Heart left ventricle (tissue), 16 donors: ENCODE measurements at regions of chr5 and their contacts with region 1.

Region 1: GRCh38 chr5:75656311-75657003 is 45.2 kb downstream of the ANKDD1B start:
- DNase-seq: peak in 1 of 5 donors; percentile 39
- ATAC-seq: peak in 2 of 4 donors; percentile 46 to 57
- H3K4me3 ChIP-seq: peak overlapping the region in 10 of 12 donors; percentile 9 to 64 (median 44)
- H3K27ac ChIP-seq: peak overlapping the region in 4 of 12 donors; percentile 32 to 67 (median 37)
- H3K4me1 ChIP-seq: peaks cover 0 to 14% (median 0%) of the 10 kb centered on the region in 12 donors
- H3K27me3 ChIP-seq: no peaks in the 10 kb centered on the region
- CTCF ChIP-seq: no peak
- POLR2A ChIP-seq: no peak

Region 2: GRCh38 chr5:75496026-75496425 is 160.4 kb before region 1 on chr5:
- intact Hi-C with region 1: loop called in 1 of 10 experiments (anchors 10 kb)
- DNase-seq: no peak
- ATAC-seq: no peak
- H3K4me3 ChIP-seq: no peak overlapping the region
- H3K27ac ChIP-seq: no peak overlapping the region
- H3K4me1 ChIP-seq: no peaks in the 10 kb centered on the region
- H3K27me3 ChIP-seq: no peaks in the 10 kb centered on the region
- CTCF ChIP-seq: no peak
- POLR2A ChIP-seq: no peak

Region 3: GRCh38 chr5:76062502-76063041 is 406.1 kb after region 1 on chr5:
- intact Hi-C with region 1: no loop called
- DNase-seq: no peak
- ATAC-seq: no peak
- H3K4me3 ChIP-seq: no peak overlapping the region
- H3K27ac ChIP-seq: no peak overlapping the region
- H3K4me1 ChIP-seq: no peaks in the 10 kb centered on the region
- H3K27me3 ChIP-seq: peaks cover 0 to 6% (median 0%) of the 10 kb centered on the region in 9 donors
- CTCF ChIP-seq: no peak
- POLR2A ChIP-seq: no peak